ENCODE measurements at regions of chr6 and their contacts with region 1.

Region 1: DNA sequence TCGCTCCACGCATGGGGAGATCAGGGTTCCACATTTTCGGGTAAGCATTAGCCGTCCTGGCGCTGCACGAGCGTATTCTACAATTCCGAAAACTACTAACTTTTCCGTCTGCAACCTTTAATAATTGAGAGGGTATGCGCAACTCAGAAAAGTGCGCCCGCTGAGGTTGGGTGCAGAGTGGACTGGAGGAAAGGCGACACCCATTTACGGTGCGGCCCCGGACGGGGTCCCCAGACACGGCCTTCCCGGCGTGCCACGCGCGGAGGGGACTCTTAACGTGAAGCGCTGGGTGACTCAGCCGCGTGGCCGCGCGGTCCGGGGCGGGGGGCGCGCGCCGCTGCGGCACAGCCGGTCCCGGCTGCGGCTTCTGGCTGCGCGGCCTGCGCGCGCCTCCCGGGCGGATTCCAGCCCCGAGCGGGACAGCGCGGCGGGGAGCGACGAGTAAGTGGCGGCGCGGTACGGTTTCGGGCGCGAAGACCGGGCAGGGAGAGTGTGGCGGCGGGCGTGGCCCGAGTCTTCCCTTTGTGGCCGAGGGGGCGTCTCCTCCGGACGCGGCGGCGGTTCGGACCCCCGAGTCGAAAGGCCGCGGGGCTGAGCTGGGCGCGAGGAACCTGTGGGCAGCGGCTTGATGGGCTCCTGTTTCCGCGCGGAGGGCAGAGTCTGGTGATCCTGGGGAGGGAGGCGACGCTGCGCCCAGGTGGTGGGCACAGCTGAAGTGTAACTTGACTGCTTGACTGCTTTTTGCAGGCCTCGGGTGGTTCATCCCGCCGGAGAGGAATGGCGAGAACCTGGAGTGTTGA is at the starts of genes KCTD20 and PXT1:
- DNase-seq: peak; percentile 92
- CTCF ChIP-seq: no peak

Region 2: DNA sequence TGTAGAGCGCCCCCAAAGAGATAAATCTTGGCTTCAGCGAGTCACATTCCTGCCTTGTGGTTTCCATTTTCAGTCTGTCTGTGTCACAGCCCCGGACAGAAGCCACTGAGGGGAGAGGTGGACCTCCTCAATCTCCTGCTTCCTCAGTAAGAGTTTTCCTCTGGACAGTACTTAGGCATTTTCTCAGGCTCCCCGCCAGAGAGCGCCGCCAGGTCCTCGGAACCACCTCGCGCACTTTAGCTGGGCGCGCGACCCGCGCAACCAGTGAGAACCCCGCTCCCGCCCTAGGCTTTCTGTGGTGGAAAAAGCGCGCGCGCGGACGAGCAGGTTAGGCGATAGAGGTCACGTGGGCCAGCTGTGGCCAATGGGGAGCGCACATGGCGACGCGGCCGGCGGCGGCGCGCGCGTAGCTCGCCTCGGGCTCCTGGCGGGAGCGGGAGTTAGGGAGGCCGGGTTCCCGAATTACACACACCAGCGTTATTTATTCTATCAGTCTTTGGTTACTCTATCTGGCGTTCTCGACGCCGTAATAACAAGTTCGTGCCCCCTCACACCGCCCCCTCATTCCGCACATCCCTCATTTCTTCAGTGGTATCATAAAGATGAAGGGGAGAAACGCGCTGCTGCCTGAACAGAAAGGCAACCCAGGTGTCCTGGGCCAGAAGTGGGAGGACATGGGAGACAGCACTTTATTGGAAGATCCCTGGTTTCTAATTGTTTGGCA is 19.6 kb before region 1 on chr6:
- CTCF ChIA-PET with region 1: interaction called, 11 read pairs
- POLR2A ChIA-PET with region 1: no interaction called
- DNase-seq: peak; percentile 97
- CTCF ChIP-seq: peak; percentile 75

Region 3: GRCh38 chr6:36461646-36462045 is 18.8 kb after region 1 on chr6:
- CTCF ChIA-PET with region 1: interaction called, 10 read pairs
- POLR2A ChIA-PET with region 1: interaction called, 5 read pairs
- DNase-seq: no peak
- CTCF ChIP-seq: no peak

Measured in GM10248 (cell line).